Sigmoid colon (tissue), 7 donors: ENCODE measurements at regions of chr11 and their contacts with region 1.

Region 1: GRCh38 chr11:70270104-70270876 is at the start of gene PPFIA1:
- DNase-seq: peak; percentile 97
- H3K4me3 ChIP-seq: peak within 1 kb of the TSS; percentile 76 to 98 (median 96)
- H3K27ac ChIP-seq: peak within 1 kb of the TSS; percentile 85 to 89 (median 87)
- H3K4me1 ChIP-seq: peaks cover 0 to 30% (median 22%) of the 10 kb centered on the region in 4 donors
- H3K27me3 ChIP-seq: no peaks in the 10 kb centered on the region
- CTCF ChIP-seq: no peak
- EP300 ChIP-seq: peak in 1 of 4 donors; percentile 13
- POLR2A ChIP-seq: peak in 1 of 2 donors; percentile 37
- total RNA-seq, gene PPFIA1: 43.4 to 62.1 (median 51.2) TPM

Region 2: GRCh38 chr11:70202898-70203748 is 67.2 kb before region 1 on chr11 and contains the start of gene FADD:
- intact Hi-C with region 1: loop called (anchors 2 kb)
- DNase-seq: peak; percentile 94
- H3K4me3 ChIP-seq: peak within 1 kb of the TSS; percentile 77 to 95 (median 82)
- H3K27ac ChIP-seq: peak within 1 kb of the TSS; percentile 92 to 93 (median 92)
- H3K4me1 ChIP-seq: peaks cover 0 to 25% (median 21%) of the 10 kb centered on the region in 4 donors
- H3K27me3 ChIP-seq: no peaks in the 10 kb centered on the region
- CTCF ChIP-seq: no peak
- EP300 ChIP-seq: no peak
- POLR2A ChIP-seq: peak; percentile 46 to 65
- total RNA-seq, gene FADD: 11.5 to 24.1 (median 14.6) TPM

Region 3: DNA sequence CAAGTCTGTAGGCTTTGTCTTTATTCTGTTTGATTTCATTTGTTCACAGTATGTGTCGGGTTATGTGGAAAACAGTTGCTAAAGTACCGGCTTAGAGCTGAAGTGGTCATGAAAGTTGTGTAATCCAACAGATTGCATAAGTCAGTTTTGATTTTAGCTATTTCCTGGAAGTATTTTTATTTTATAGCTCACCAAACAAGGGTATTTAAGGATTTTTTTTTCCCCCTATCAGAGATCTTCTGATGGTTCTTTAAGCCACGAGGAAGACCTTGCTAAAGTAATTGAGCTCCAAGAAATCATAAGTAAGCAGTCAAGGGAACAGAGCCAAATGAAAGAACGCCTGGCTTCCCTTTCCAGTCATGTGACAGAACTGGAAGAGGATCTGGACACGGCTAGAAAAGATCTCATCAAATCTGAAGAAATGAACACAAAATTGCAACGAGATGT is 56.1 kb after region 1 on chr11:
- intact Hi-C with region 1: loop called (anchors 2 kb)
- DNase-seq: peak; percentile 75
- H3K4me3 ChIP-seq: no peak overlapping the region
- H3K27ac ChIP-seq: peak overlapping the region; percentile 20 to 71 (median 59)
- H3K4me1 ChIP-seq: peaks cover 0 to 32% (median 13%) of the 10 kb centered on the region in 4 donors
- H3K27me3 ChIP-seq: no peaks in the 10 kb centered on the region
- CTCF ChIP-seq: no peak
- EP300 ChIP-seq: no peak
- POLR2A ChIP-seq: no peak

Region 4: GRCh38 chr11:71448257-71449171 is 1178.2 kb after region 1 on chr11 and contains the start of gene DHCR7:
- intact Hi-C with region 1: loop called (anchors 5 kb)
- DNase-seq: peak; percentile 97
- H3K4me3 ChIP-seq: peak within 1 kb of the TSS; percentile 63 to 81 (median 78)
- H3K27ac ChIP-seq: peak within 1 kb of the TSS; percentile 66 to 78 (median 74)
- H3K4me1 ChIP-seq: peaks cover 0 to 36% (median 28%) of the 10 kb centered on the region in 4 donors
- H3K27me3 ChIP-seq: no peaks in the 10 kb centered on the region
- CTCF ChIP-seq: no peak
- EP300 ChIP-seq: no peak
- POLR2A ChIP-seq: no peak
- total RNA-seq, gene DHCR7: 4.1 to 7.5 (median 5.3) TPM